ENCODE measurements at regions of chrX and their contacts with region 1.

Region 1: DNA sequence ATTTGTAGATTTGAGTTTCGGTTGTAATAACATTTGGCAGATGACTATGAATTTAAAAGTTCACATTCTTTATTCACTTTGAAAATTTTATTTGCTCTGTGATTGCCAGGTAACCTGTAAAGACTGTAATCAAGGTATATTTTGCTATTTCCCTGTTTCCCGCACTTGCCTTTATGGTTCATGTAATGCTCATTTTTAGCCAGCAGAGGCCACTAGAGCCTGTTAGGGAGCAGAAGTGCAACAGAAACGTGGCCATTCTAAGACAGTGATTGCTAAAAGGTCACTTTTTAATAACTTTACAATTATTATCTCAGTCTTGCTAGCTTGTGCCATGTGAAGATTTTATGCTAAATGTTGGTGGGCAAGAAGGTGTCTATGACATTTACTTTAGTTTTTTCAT is 12.4 kb downstream of the YIPF6 start:
- DNase-seq: no peak
- H3K4me3 ChIP-seq: no peak overlapping the region
- H3K27ac ChIP-seq: no peak overlapping the region
- H3K4me1 ChIP-seq: no peaks in the 10 kb centered on the region
- H3K27me3 ChIP-seq: no peaks in the 10 kb centered on the region
- CTCF ChIP-seq: peak; percentile 45 to 79 (median 70)

Region 2: GRCh38 chrX:68588602-68589371 is 77.5 kb after region 1 on chrX:
- intact Hi-C with region 1: no loop called
- DNase-seq: no peak
- H3K4me3 ChIP-seq: no peak overlapping the region
- H3K27ac ChIP-seq: no peak overlapping the region
- H3K4me1 ChIP-seq: no peaks in the 10 kb centered on the region
- H3K27me3 ChIP-seq: no peaks in the 10 kb centered on the region
- CTCF ChIP-seq: no peak

Region 3: GRCh38 chrX:68710870-68711576 is 199.8 kb after region 1 on chrX:
- intact Hi-C with region 1: loop called (anchors 5 kb)
- DNase-seq: no peak
- H3K4me3 ChIP-seq: no peak overlapping the region
- H3K27ac ChIP-seq: no peak overlapping the region
- H3K4me1 ChIP-seq: no peaks in the 10 kb centered on the region
- H3K27me3 ChIP-seq: no peaks in the 10 kb centered on the region
- CTCF ChIP-seq: peak in 2 of 3 experiments; percentile 18 to 40

Region 4: GRCh38 chrX:69285881-69286564 is 774.8 kb after region 1 on chrX:
- intact Hi-C with region 1: loop called (anchors 10 kb)
- DNase-seq: peak in 1 of 2 donors; percentile 71
- H3K4me3 ChIP-seq: peak overlapping the region; percentile 53 to 61
- H3K27ac ChIP-seq: peak overlapping the region in 1 of 2 donors; percentile 38
- H3K4me1 ChIP-seq: peaks cover 0 to 3% of the 10 kb centered on the region in 2 donors
- H3K27me3 ChIP-seq: no peaks in the 10 kb centered on the region
- CTCF ChIP-seq: peak; percentile 68 to 94 (median 88)